A549 (cell line): ENCODE measurements at regions of chr17 and their contacts with region 1.

Region 1: GRCh38 chr17:44844390-44844830 is 3.3 kb upstream of the HIGD1B start:
- DNase-seq: no peak
- ATAC-seq: peak; percentile 10 to 35; a peak in 4 of 6 replicates
- H3K4me3 ChIP-seq: no peak overlapping the region
- H3K27ac ChIP-seq: no peak overlapping the region
- H3K4me1 ChIP-seq: no peaks in the 10 kb centered on the region
- CTCF ChIP-seq: no peak
- EP300 ChIP-seq: no peak
- POLR2A ChIP-seq: no peak
- RAD21 ChIP-seq: no peak

Region 2: DNA sequence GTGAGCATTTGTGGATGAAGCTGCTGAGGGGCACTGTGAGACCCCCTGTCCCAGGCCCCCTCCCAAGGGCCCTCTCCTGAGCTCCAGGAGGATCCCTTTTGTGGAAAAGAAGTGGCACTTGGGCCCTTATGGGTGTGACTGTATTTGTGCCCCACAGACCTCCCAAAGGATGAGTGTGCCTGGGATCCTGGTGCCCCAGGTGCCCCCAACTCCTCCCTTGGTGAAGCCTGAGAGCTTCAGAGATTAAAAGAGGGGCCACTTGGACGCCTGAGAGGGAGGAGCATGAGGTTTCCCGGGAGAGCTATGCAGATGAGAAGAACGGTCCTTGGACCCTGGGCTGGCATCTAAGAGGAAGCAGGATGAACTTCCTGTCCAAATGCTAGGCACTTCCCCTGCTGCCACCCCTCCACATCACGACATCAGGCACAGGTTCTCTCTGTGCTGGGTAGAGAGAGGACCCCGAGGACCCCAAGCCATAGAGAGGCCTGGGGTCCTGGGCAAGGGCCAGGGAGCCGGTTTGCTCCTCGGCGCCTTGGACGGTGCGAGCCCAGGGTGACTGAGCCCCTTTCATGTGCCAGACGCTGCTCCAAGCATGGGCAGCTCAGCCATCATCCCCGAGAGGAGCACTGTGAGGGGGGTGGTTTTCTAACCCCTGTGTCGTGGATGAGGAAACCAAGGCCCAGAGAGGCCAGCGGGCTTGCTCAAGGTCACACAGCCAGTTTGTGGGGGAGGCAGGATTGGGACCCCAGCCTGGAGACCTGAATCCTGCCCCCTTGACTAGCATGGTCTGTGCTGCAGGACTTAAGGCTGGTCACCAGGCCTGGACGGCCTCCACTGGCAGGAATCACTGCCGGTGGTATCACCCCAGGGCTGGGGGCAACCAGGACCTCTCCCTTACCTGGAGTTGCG is 91.2 kb before region 1 on chr17:
- CTCF ChIA-PET with region 1: no interaction called
- POLR2A ChIA-PET with region 1: no interaction called
- DNase-seq: no peak
- ATAC-seq: no peak; a peak in 1 of 6 replicates
- H3K4me3 ChIP-seq: no peak overlapping the region
- H3K27ac ChIP-seq: no peak overlapping the region
- H3K4me1 ChIP-seq: no peaks in the 10 kb centered on the region
- CTCF ChIP-seq: no peak
- EP300 ChIP-seq: no peak
- POLR2A ChIP-seq: no peak
- RAD21 ChIP-seq: no peak

Region 3: DNA sequence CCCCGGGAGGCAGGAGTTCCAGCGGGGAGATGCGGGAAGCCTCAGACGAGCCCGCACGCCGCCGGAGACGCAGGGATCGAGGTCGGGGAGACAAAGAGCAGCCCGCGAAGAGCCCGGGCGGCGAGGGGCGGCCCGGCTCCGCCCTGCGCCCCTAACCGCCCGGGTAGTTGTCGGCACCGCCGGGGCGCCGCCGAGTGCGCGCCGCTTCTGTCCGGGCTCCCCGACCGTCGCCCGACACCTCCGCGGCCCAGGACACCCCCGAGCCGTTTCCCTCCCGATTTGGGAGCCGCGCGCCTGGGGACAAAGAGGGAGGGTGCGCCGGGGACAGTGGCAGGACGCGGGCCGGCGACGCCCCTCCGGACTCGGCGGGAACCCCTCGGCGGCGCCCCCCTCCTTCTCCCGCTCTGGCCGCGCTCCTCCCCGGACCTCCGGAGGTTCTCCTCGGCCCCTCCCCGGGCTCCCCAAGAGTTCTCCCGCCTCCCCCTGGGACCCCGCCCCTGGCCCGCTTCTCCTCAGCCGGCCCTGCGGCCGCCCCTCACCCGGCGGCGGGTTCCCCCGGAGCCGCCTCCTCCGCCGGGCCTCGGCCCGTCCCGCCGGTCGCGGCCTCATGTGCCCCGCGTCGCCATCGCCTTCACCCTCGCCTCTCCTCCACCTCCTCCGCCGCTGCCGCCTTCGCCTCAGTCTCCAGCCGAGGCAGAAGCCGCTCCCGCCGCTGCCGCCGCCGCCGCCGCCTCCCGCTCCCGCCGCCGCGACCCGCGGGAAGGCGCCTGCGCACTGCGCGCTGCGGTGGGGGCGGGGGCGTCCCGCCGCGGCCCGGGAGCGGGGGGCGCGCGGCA is 14.7 kb before region 1 on chr17 and contains the start of gene GJC1:
- CTCF ChIA-PET with region 1: interaction called, 13 read pairs
- POLR2A ChIA-PET with region 1: no interaction called
- DNase-seq: peak; percentile 48 to 49
- ATAC-seq: peak; percentile 73 to 76
- H3K4me3 ChIP-seq: peak within 1 kb of the TSS; percentile 87
- H3K27ac ChIP-seq: peak within 1 kb of the TSS; percentile 77 to 95
- H3K4me1 ChIP-seq: peaks cover 18% of the 10 kb centered on the region
- CTCF ChIP-seq: no peak
- EP300 ChIP-seq: no peak
- POLR2A ChIP-seq: peak; percentile 72
- RAD21 ChIP-seq: no peak
- polyA plus RNA-seq, gene GJC1: 22.1 and 30.4 TPM in 2 replicates

Region 4: DNA sequence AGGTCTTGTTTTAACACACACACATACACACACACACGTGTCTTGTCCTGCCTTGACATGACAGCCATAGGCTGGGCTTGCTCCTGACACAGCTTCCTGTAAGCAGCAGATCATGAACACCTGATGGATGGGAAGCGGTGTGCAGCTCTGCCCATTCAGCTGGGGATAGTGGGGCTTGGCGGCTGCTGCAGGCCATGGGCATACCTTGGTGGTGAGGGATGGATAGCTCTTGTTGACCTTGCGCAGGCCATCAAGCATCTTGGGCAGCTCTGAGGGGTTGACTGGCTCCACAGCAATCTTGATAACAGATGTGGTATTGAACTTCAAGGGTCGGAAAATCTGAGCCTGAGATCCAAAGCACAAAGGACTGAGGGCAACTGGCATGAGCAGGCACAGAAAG is 15.3 kb after region 1 on chr17:
- CTCF ChIA-PET with region 1: interaction called, 211 read pairs
- POLR2A ChIA-PET with region 1: no interaction called
- DNase-seq: no peak
- ATAC-seq: no peak
- H3K4me3 ChIP-seq: no peak overlapping the region
- H3K27ac ChIP-seq: no peak overlapping the region
- H3K4me1 ChIP-seq: no peaks in the 10 kb centered on the region
- CTCF ChIP-seq: no peak
- EP300 ChIP-seq: no peak
- POLR2A ChIP-seq: no peak
- RAD21 ChIP-seq: no peak